Gastrocnemius medialis (tissue), 4 donors: ENCODE measurements at regions of chr20 and their contacts with region 1.

Region 1: DNA sequence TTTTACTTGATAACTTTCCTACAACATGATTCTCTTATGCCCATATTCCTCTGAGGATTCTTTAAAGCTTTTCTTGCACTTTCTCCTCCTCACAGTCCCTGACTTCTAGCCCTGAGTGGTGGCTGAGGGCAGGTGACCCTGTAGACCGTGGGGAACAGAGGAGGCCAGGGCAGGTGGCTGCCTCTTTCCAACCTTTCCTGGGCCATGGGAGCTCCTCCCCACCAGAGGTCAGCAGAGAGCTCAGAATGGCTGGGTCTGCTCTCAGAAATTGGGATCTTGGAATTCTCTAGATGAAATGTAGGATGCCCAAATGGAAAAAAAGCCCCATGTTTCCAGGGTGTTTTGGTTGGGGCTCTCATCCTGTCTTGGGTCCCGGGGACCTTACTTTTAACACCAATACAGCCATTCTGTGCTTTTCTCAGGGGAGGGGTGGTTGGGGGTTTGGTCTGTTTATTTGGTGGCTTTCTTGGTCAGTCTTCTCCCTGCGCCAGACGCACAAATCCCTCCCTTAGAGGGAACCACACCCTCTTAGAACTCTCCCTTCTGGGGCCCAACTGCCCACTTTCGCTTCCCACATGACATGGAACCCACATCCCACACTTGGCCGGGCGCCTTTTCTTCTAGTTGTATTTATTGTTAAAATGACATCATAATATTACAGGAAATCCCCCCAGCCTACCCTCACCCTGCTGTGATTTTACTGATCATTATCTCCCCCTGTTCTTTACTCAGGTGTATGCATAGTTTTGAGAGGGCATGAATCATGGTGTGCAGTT is 17.9 kb downstream of the GNAS start:
- DNase-seq: peak; percentile 38 to 52
- ATAC-seq: peak; percentile 68 to 85
- H3K4me3 ChIP-seq: no peak overlapping the region
- H3K27ac ChIP-seq: no peak overlapping the region
- H3K4me1 ChIP-seq: no peaks in the 10 kb centered on the region
- H3K27me3 ChIP-seq: no peaks in the 10 kb centered on the region
- CTCF ChIP-seq: peak; percentile 67 to 89 (median 86)
- POLR2A ChIP-seq: no peak

Region 2: GRCh38 chr20:58850693-58851174 is 19.7 kb before region 1 on chr20 and contains the start of gene GNAS-AS1:
- in situ Hi-C with region 1: no loop called
- intact Hi-C with region 1: no loop called
- DNase-seq: peak; percentile 48 to 80
- ATAC-seq: peak; percentile 50 to 63
- H3K4me3 ChIP-seq: peak within 1 kb of the TSS; percentile 53 to 64 (median 58)
- H3K27ac ChIP-seq: peak within 1 kb of the TSS in 1 of 4 donors; percentile 44
- H3K4me1 ChIP-seq: no peaks in the 10 kb centered on the region
- H3K27me3 ChIP-seq: peaks cover 17 to 34% (median 26%) of the 10 kb centered on the region in 3 donors
- CTCF ChIP-seq: no peak
- POLR2A ChIP-seq: no peak
- total RNA-seq, gene GNAS-AS1: not detected

Region 3: DNA sequence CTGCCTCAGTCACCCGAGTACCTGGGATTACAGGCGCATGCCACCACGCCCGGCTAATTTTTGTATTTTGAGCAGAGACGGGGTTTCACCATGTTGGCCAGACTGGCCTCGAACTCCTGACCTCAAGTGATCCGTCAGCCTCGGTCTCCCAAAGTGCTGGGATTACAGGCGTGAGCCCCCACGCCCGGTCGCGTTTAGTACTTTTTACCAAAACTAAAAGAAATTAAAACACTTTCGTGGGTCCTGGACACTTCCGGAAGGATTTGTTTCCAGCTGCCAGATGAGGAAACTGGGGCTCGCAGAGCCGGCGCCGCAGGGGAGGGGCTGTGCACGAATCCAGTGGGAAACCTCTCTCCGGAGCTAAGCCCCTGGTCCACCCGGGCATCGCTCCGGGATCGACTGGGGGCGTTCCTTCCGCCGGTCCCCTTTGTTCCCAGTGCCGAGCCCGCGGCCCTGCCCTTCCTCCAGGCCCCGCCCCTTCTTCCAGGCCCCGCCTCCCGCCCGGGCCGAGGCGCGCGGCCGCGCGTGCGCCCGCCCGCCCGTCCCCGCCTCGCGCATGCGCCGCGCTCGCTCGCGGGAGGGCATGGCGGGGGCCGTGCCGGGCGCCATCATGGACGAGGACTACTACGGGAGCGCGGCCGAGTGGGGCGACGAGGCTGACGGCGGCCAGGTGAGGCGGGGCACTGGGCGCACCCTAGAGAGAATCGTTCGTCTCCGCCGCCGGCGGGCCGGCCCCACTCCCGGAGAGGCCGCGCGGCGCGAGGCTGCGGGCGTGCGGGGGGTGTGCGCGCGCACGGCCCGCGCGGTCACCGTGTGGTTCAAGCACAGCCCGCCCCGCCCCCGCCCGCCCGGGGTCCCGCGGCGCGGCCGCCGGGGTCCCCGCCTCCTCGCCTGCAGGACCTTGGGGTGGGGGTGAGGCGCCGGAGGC is 110.5 kb after region 1 on chr20 and contains the start of gene NELFCD:
- in situ Hi-C with region 1: loop called in 2 of 4 experiments (anchors 5 to 25 kb)
- intact Hi-C with region 1: no loop called
- DNase-seq: peak; percentile 72 to 82
- ATAC-seq: peak; percentile 89 to 92
- H3K4me3 ChIP-seq: peak within 1 kb of the TSS; percentile 90 to 100 (median 95)
- H3K27ac ChIP-seq: peak within 1 kb of the TSS; percentile 83 to 92 (median 90)
- H3K4me1 ChIP-seq: peaks cover 32 to 38% of the 10 kb centered on the region in 2 donors
- H3K27me3 ChIP-seq: no peaks in the 10 kb centered on the region
- CTCF ChIP-seq: no peak
- POLR2A ChIP-seq: peak; percentile 80
- total RNA-seq, gene NELFCD: 37.8 to 44.3 (median 40.9) TPM

Region 4: GRCh38 chr20:59042796-59043660 is 172.6 kb after region 1 on chr20:
- in situ Hi-C with region 1: no loop called
- intact Hi-C with region 1: loop called (anchors 5 kb)
- DNase-seq: peak; percentile 85 to 92
- ATAC-seq: peak; percentile 91 to 97
- H3K4me3 ChIP-seq: peak overlapping the region; percentile 83 to 96 (median 86)
- H3K27ac ChIP-seq: peak overlapping the region; percentile 84 to 92 (median 90)
- H3K4me1 ChIP-seq: peaks cover 28 to 30% of the 10 kb centered on the region in 2 donors
- H3K27me3 ChIP-seq: no peaks in the 10 kb centered on the region
- CTCF ChIP-seq: peak in 2 of 5 experiments; percentile 12 to 41
- POLR2A ChIP-seq: no peak

Region 5: GRCh38 chr20:59087829-59088433 is 217.5 kb after region 1 on chr20:
- in situ Hi-C with region 1: no loop called
- intact Hi-C with region 1: loop called (anchors 1 kb)
- DNase-seq: peak; percentile 46 to 65
- ATAC-seq: peak; percentile 54 to 72
- H3K4me3 ChIP-seq: no peak overlapping the region
- H3K27ac ChIP-seq: no peak overlapping the region
- H3K4me1 ChIP-seq: peaks cover 0 to 5% of the 10 kb centered on the region in 2 donors
- H3K27me3 ChIP-seq: no peaks in the 10 kb centered on the region
- CTCF ChIP-seq: peak; percentile 64 to 94 (median 82)
- POLR2A ChIP-seq: no peak

Region 6: DNA sequence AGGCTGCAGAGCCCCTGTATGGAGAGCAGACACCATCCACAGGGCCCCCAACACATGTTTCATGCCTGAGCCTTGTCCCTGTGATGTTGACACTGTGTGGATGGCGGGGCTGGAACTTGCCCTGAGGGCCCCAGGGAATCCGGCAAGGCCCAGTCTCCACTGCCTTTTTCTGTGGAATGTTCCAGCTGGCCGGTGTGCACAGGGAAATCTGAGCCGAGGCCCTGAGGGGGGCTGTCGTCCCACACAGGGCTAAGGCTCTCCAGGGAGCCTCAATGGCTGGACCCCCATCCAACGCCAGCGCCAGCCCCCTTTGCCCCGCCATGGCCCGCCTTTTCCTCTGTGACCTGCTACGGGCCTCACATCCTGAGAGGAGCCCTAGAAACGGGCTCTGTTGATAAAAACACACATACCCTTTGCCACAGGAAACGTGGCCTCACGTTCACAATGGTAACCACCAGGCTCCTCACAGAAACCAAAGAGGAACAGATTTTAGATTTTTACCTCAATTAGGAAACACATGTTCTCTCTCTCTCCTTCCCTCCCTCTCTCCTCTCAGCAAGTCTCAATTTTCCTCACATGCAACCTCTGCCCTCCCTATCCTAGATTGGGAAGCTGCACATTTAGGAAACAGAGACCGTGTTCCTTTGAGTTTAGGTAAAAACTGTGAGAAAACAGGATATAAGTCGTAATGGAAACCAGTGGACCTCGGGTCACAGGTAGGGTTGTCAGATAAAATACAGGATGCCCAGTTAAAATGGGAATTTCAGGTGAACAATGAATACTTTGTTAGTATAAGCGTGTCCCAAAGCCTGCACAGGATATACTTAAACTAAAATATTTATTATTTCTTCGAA is 279.5 kb after region 1 on chr20:
- in situ Hi-C with region 1: no loop called
- intact Hi-C with region 1: loop called (anchors 5 kb)
- DNase-seq: peak in 1 of 2 donors; percentile 19
- ATAC-seq: no peak
- H3K4me3 ChIP-seq: no peak overlapping the region
- H3K27ac ChIP-seq: peak overlapping the region; percentile 7 to 59 (median 38)
- H3K4me1 ChIP-seq: peaks cover 22 to 46% of the 10 kb centered on the region in 2 donors
- H3K27me3 ChIP-seq: no peaks in the 10 kb centered on the region
- CTCF ChIP-seq: no peak
- POLR2A ChIP-seq: no peak

Region 7: DNA sequence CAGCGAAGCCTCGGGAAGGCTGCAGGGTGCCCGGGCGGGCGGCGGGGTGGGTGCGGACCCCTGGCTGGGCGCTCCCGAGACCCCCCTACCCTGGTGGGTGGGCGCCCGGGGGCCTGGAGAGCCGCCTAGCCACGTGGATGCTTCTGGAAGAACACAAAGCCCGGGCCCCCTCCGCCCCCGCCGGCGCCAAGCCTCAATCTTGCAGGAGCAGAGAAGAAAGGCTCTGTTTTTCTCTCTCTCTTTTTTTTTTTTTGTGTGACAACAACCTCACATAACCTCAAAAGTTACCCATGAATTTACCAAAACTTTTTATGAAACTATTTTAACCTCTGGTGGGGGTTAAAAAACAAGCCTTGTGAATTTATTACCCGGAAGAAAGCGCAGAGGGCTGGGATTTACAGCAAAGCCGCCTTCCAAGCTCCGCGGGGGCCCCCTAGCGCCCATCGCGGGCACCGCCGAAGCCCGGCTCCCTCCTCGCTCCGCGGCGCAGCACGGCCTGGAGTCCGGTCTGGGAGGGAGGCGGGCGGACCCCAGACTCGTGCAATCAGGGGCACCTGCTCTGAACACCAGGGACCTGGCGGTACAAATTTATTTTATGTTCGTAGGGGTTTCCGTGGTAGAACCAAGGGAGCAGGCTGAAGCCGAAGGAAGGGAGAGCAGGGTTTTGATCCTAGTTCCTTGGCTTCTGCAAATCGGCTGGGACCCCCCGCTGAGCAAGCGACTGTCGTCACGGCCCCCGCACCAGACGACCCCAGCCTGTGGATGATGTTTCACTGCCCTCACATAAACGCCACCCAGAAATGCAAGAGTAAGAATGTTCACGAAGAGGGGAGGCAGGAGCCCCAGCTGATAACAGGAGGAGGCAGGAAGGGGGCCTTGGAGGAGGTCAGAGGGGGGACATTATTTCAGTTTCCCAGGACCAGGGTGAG is 352.1 kb after region 1 on chr20:
- in situ Hi-C with region 1: loop called (anchors 5 to 10 kb)
- intact Hi-C with region 1: loop called (anchors 1 kb)
- DNase-seq: peak; percentile 36 to 47
- ATAC-seq: peak; percentile 73 to 76
- H3K4me3 ChIP-seq: peak overlapping the region; percentile 54 to 85 (median 60)
- H3K27ac ChIP-seq: peak overlapping the region in 3 of 4 donors; percentile 30 to 51 (median 47)
- H3K4me1 ChIP-seq: peaks cover 10 to 16% of the 10 kb centered on the region in 2 donors
- H3K27me3 ChIP-seq: peaks cover 0 to 6% (median 5%) of the 10 kb centered on the region in 3 donors
- CTCF ChIP-seq: peak; percentile 82 to 98 (median 83)
- POLR2A ChIP-seq: no peak

Region 8: GRCh38 chr20:59495894-59496510 is 625.6 kb after region 1 on chr20:
- in situ Hi-C with region 1: no loop called
- intact Hi-C with region 1: loop called (anchors 5 kb)
- DNase-seq: peak in 1 of 2 donors; percentile 22
- ATAC-seq: peak in 1 of 2 donors; percentile 47
- H3K4me3 ChIP-seq: no peak overlapping the region
- H3K27ac ChIP-seq: no peak overlapping the region
- H3K4me1 ChIP-seq: no peaks in the 10 kb centered on the region
- H3K27me3 ChIP-seq: peaks cover 0 to 13% (median 0%) of the 10 kb centered on the region in 3 donors
- CTCF ChIP-seq: peak; percentile 23 to 74 (median 44)
- POLR2A ChIP-seq: no peak